ENCODE measurements at regions of chr7 and their contacts with region 1.

Region 1: DNA sequence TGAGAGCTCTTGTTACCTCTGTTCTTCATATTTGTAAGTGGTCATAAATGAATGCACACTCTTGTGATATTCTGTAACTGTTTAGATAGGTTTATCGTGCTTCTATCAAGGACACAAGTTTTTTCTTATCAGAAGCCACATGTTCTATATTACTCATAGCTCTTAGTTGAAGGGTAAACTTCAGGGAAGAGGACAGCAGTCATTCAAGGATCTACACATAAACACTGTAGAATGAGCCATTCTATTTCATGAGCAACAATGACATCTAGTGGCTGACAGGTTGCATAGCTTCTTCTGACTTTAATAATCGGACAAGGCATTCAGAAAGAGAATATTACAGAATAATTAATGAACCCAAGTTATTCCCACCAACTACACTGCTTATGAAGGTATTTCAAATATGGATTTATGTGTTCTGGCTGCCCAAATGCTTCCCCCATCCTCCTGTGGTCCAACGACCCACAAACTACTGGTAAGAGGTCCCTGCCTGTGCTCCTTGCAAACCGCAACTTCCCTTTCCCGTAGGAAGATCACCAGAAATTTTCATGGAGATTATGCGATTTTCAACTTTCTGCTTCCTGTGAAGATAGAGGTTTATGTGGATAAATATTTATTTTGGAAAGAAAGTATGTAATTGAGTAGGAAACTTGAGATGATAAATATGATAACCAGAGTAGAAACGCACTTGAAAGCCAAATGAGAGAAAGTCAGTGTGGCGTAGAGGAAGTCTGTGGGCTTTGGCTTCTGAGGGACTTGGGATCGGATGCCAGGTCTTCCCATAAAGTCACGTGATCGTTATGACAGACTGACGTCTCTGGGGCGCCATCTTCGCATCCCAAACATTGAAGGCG is 16.8 kb upstream of the ABCB5 start:
- DNase-seq: peak in 2 of 35 experiments; percentile 3 to 66
- ATAC-seq: peak in 2 of 4 experiments; percentile 41 to 55
- H3K4me3 ChIP-seq: no peak overlapping the region
- H3K4me3 Mint-ChIP-seq: no peak overlapping the region
- H3K27ac ChIP-seq: no peak overlapping the region
- H3K27ac Mint-ChIP-seq: no peak overlapping the region
- H3K4me1 ChIP-seq: no peaks in the 10 kb centered on the region
- H3K4me1 Mint-ChIP-seq: peaks cover 0 to 4% (median 4%) of the 10 kb centered on the region in 3 donors
- H3K27me3 ChIP-seq: no peaks in the 10 kb centered on the region
- H3K27me3 Mint-ChIP-seq: peaks cover 13 to 15% of the 10 kb centered on the region in 2 donors

Region 2: GRCh38 chr7:19708397-19709248 is 890.1 kb before region 1 on chr7 and contains the start of gene POLR1F:
- CTCF ChIA-PET with region 1: interaction called, 75 to 111 read pairs
- POLR2A ChIA-PET with region 1: interaction called, 3 to 4 read pairs
- DNase-seq: peak; percentile 85 to 97 (median 92)
- ATAC-seq: peak; percentile 95 to 96 (median 95)
- H3K4me3 ChIP-seq: peak within 1 kb of the TSS; percentile 97 to 99
- H3K4me3 Mint-ChIP-seq: peak within 1 kb of the TSS; percentile 92 to 99 (median 93)
- H3K27ac ChIP-seq: peak within 1 kb of the TSS; percentile 90
- H3K27ac Mint-ChIP-seq: peak within 1 kb of the TSS; percentile 63 to 89
- H3K4me1 ChIP-seq: peaks cover 14 to 17% of the 10 kb centered on the region in 2 experiments
- H3K4me1 Mint-ChIP-seq: peaks cover 53 to 55% (median 53%) of the 10 kb centered on the region in 3 donors
- H3K27me3 ChIP-seq: no peaks in the 10 kb centered on the region
- H3K27me3 Mint-ChIP-seq: no peaks in the 10 kb centered on the region
- total RNA-seq, gene POLR1F: 11.9 to 22.1 (median 12.5) TPM

Measured in T-cell (primary cell).